ENCODE measurements at regions of chr9 and their contacts with region 1.

Region 1: DNA sequence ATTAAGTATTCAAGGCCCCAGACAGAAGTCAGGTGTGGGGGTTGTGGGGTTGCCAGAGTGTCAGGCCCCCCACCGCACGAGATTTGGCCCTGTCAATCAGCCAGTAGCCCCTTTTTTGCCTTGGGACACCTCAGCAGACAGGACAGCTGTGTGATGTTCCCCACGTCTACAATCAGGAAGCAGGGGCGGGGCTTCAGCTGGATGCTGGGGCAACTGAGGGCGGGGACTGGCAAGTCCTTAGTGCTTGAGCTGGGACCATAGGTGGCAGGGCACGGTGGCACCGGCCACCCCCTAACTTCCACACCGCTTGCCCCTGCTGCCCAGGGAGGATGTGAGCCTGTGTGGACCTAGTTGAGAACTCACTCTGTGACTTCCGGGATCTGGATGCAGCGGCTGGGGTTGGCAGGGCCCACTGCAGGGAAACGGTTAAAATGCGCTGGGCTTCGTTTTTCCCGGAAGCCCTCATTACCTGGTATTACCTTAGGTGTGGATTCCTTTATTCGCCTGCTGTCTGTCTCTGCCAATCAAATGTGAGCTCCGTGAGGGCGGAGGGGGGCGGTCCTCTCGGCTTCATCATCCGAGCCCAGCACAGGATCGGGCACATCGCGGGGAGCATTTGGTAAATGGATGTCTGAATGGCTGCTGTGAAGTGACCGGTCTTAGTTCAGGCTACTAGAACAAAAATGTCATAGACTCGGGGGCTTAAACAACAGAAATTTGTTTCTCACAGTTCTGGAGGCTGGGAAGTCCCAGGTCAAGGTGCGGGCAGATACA is 7.5 kb upstream of the GTF3C5 start:
- DNase-seq: peak in 1 of 2 experiments; percentile 47
- H3K4me3 ChIP-seq: no peak overlapping the region
- H3K4me3 Mint-ChIP-seq: no peak overlapping the region
- H3K27ac Mint-ChIP-seq: no peak overlapping the region
- H3K4me1 ChIP-seq: peaks cover 4% of the 10 kb centered on the region; the same call in 1 of the 2 replicates
- H3K4me1 Mint-ChIP-seq: no peaks in the 10 kb centered on the region
- H3K27me3 ChIP-seq: no peaks in the 10 kb centered on the region
- H3K27me3 Mint-ChIP-seq: peaks cover 5% of the 10 kb centered on the region
- CTCF ChIP-seq: no peak

Region 2: GRCh38 chr9:132498531-132499210 is 524.6 kb before region 1 on chr9:
- CTCF ChIA-PET with region 1: no interaction called
- POLR2A ChIA-PET with region 1: no interaction called
- intact Hi-C with region 1: no loop called
- DNase-seq: no peak
- H3K4me3 ChIP-seq: no peak overlapping the region
- H3K4me3 Mint-ChIP-seq: no peak overlapping the region
- H3K27ac Mint-ChIP-seq: no peak overlapping the region
- H3K4me1 ChIP-seq: no peaks in the 10 kb centered on the region
- H3K4me1 Mint-ChIP-seq: no peaks in the 10 kb centered on the region
- H3K27me3 ChIP-seq: no peaks in the 10 kb centered on the region
- H3K27me3 Mint-ChIP-seq: peaks cover 15% of the 10 kb centered on the region
- CTCF ChIP-seq: no peak

Region 3: DNA sequence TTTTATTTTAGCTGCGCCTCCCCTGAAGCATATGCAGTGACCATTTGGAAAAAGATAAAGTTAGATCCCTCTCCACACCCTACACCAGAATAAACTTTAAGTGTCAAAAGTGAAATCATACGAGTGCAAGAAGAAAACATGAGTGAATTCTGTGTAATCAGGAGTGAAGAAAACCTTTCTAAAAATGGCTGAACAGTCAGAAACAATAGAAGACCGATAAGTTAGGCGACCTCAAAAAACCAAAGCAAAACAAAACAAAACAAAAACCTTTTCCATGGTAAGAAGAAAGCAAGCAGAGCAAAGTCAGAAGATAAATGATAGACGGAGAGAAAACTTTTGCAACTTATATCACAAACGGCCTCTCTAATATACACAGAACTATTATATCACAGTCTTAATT is 62.3 kb before region 1 on chr9:
- CTCF ChIA-PET with region 1: no interaction called
- POLR2A ChIA-PET with region 1: no interaction called
- intact Hi-C with region 1: no loop called
- DNase-seq: no peak
- H3K4me3 ChIP-seq: no peak overlapping the region
- H3K4me3 Mint-ChIP-seq: no peak overlapping the region
- H3K27ac Mint-ChIP-seq: no peak overlapping the region
- H3K4me1 ChIP-seq: no peaks in the 10 kb centered on the region
- H3K4me1 Mint-ChIP-seq: no peaks in the 10 kb centered on the region
- H3K27me3 ChIP-seq: no peaks in the 10 kb centered on the region
- H3K27me3 Mint-ChIP-seq: peaks cover 9% of the 10 kb centered on the region
- CTCF ChIP-seq: no peak

Region 4: GRCh38 chr9:132973713-132974112 is 49.6 kb before region 1 on chr9:
- CTCF ChIA-PET with region 1: interaction called, 7 read pairs
- POLR2A ChIA-PET with region 1: interaction called, 4 read pairs
- intact Hi-C with region 1: loop called (anchors 1 kb)
- DNase-seq: peak; percentile 38 to 68
- H3K4me3 ChIP-seq: no peak overlapping the region
- H3K4me3 Mint-ChIP-seq: no peak overlapping the region
- H3K27ac Mint-ChIP-seq: no peak overlapping the region
- H3K4me1 ChIP-seq: peaks cover 27% of the 10 kb centered on the region
- H3K4me1 Mint-ChIP-seq: peaks cover 7% of the 10 kb centered on the region
- H3K27me3 ChIP-seq: no peaks in the 10 kb centered on the region
- H3K27me3 Mint-ChIP-seq: peaks cover 3% of the 10 kb centered on the region
- CTCF ChIP-seq: no peak

Region 5: DNA sequence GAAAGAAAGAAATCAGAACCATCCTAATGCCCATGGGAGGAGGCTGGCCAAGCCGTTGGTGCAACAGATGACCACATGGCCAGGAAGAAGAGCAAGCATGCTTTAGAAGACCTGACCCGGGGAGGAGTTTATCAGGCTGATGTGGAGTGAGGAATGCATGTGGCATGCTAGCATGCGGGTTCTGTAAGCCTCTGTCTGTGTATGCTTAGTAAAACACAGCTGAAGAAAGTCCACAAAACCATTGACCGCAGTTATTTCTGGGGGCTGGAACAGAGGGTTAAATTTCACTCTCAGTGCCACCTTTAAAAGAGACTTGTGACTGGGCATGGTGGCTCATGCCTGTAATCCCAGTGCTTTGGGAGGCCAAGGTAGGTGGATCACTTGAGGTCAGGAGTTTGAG is 25.7 kb before region 1 on chr9:
- CTCF ChIA-PET with region 1: interaction called, 8 read pairs
- POLR2A ChIA-PET with region 1: no interaction called
- intact Hi-C with region 1: loop called (anchors 1 kb)
- DNase-seq: peak; percentile 55 to 72
- H3K4me3 ChIP-seq: no peak overlapping the region
- H3K4me3 Mint-ChIP-seq: no peak overlapping the region
- H3K27ac Mint-ChIP-seq: no peak overlapping the region
- H3K4me1 ChIP-seq: peaks cover 23% of the 10 kb centered on the region
- H3K4me1 Mint-ChIP-seq: peaks cover 15% of the 10 kb centered on the region
- H3K27me3 ChIP-seq: no peaks in the 10 kb centered on the region
- H3K27me3 Mint-ChIP-seq: no peaks in the 10 kb centered on the region
- CTCF ChIP-seq: no peak

Region 6: DNA sequence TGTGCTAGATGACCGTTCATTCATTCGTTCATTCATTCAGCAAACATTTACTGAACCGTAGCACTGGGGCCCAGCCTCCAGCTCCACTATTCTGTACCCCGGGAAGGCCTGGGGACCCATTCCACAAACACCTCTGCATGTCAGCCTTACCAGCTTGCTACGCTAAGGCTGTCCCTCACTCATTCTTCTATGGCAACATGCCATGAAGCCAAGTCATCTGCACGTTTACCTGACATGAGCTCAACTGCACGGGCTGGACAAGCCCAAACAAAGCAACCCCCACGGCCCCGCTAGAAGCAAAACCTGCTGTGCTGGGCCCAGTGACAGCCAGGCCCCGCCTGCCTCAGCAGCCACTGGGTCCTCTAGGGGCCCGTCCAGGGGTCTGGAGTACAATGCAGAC is 44.5 kb after region 1 on chr9:
- CTCF ChIA-PET with region 1: no interaction called
- POLR2A ChIA-PET with region 1: no interaction called
- intact Hi-C with region 1: no loop called
- DNase-seq: no peak
- H3K4me3 ChIP-seq: no peak overlapping the region
- H3K4me3 Mint-ChIP-seq: no peak overlapping the region
- H3K27ac Mint-ChIP-seq: no peak overlapping the region
- H3K4me1 ChIP-seq: no peaks in the 10 kb centered on the region
- H3K4me1 Mint-ChIP-seq: no peaks in the 10 kb centered on the region
- H3K27me3 ChIP-seq: no peaks in the 10 kb centered on the region
- H3K27me3 Mint-ChIP-seq: no peaks in the 10 kb centered on the region
- CTCF ChIP-seq: no peak

Region 7: GRCh38 chr9:133144137-133144903 is 121.0 kb after region 1 on chr9:
- CTCF ChIA-PET with region 1: interaction called, 10 read pairs
- POLR2A ChIA-PET with region 1: no interaction called
- intact Hi-C with region 1: loop called (anchors 1 kb)
- DNase-seq: peak; percentile 74 to 84
- H3K4me3 ChIP-seq: peak overlapping the region; percentile 20; the same call in 1 of the 2 replicates
- H3K4me3 Mint-ChIP-seq: peak overlapping the region; percentile 65
- H3K27ac Mint-ChIP-seq: peak overlapping the region; percentile 74
- H3K4me1 ChIP-seq: peaks cover 20% of the 10 kb centered on the region
- H3K4me1 Mint-ChIP-seq: peaks cover 4% of the 10 kb centered on the region
- H3K27me3 ChIP-seq: no peaks in the 10 kb centered on the region
- H3K27me3 Mint-ChIP-seq: no peaks in the 10 kb centered on the region
- CTCF ChIP-seq: peak; percentile 82 to 95

Region 8: DNA sequence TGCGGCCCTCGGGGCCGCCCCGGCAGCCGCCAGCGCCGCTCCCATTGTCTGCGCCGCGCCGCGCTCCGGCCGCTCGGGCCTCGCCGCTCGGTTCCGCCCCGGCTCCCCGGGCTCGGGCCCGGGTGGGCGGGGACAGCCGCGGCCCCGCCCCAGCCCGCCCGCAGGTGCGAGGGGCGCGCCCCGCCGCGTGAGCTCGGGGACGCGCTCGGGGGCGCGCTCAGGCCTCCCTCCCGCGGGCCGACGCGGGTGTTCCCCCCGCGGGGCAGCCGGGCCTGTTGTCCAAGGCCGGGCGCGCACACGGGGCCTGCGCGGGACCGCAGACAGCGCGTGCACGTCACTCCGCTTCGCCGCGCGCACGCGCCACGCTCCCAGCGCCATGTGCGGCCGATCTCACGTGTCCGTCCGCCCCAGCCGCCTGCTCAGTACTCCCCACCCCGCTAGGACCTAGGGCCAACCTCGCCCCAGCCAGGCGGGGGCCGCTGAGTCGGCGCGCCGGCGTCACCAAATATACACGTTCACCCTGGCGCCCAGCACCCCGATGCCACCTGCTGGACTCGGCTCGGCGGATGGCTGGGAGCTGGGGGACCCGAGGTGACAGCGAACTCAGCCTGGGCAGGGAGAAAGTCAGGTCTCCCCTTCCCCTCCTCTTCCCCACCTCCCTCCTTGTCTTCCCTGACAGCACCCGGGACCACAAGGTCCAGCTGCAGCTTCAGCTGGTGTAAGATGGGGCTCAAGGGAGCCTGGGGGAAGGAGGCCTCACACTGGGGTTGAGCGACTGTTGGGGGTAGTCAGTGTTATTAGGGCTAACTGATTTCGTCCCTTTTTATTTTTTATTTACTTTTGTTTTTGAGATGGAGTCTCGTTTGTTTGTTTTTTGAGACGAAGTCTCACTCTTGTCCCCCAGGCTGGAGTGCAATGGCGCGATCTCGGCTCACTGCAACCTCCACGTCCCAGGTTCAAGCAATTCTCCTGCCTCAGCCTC is 126.1 kb after region 1 on chr9:
- CTCF ChIA-PET with region 1: interaction called, 3 read pairs
- POLR2A ChIA-PET with region 1: no interaction called
- intact Hi-C with region 1: loop called (anchors 1 kb)
- DNase-seq: peak; percentile 90 to 92
- H3K4me3 ChIP-seq: peak overlapping the region; percentile 86
- H3K4me3 Mint-ChIP-seq: peak overlapping the region; percentile 72
- H3K27ac Mint-ChIP-seq: peak overlapping the region; percentile 77
- H3K4me1 ChIP-seq: peaks cover 6% of the 10 kb centered on the region
- H3K4me1 Mint-ChIP-seq: peaks cover 4% of the 10 kb centered on the region
- H3K27me3 ChIP-seq: no peaks in the 10 kb centered on the region
- H3K27me3 Mint-ChIP-seq: no peaks in the 10 kb centered on the region
- CTCF ChIP-seq: peak in 1 of 2 experiments; percentile 46

Region 9: DNA sequence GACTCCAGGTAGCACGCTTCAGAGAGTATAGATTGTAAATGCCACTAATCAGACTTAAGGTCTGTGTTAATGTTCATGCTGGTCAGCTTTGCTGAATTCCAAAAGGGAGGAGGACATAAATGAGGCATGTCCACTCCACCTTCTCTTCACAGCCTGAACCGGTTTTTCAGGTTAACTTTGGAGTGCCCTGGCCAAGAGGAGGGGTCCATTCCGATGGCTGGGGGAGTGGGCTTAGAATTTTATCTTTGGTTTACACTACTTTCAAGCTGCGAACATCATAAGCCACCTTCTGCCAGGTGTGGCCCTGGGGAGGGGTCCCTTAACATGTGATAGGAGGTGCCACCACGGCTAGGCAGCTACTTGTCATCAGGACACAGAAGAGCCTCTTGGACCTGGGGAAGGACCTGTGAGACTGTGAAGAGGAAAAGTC is 227.5 kb after region 1 on chr9:
- CTCF ChIA-PET with region 1: no interaction called
- POLR2A ChIA-PET with region 1: interaction called, 10 read pairs
- intact Hi-C with region 1: no loop called
- DNase-seq: peak; percentile 59 to 64
- H3K4me3 ChIP-seq: no peak overlapping the region
- H3K4me3 Mint-ChIP-seq: peak overlapping the region; percentile 27
- H3K27ac Mint-ChIP-seq: peak overlapping the region; percentile 3
- H3K4me1 ChIP-seq: peaks cover 33% of the 10 kb centered on the region
- H3K4me1 Mint-ChIP-seq: peaks cover 21% of the 10 kb centered on the region
- H3K27me3 ChIP-seq: no peaks in the 10 kb centered on the region
- H3K27me3 Mint-ChIP-seq: no peaks in the 10 kb centered on the region
- CTCF ChIP-seq: no peak

Measured in Caco-2 (cell line).